CD4-positive, alpha-beta memory T cell (primary cell): ENCODE measurements at regions of chr5 and their contacts with region 1.

Region 1: DNA sequence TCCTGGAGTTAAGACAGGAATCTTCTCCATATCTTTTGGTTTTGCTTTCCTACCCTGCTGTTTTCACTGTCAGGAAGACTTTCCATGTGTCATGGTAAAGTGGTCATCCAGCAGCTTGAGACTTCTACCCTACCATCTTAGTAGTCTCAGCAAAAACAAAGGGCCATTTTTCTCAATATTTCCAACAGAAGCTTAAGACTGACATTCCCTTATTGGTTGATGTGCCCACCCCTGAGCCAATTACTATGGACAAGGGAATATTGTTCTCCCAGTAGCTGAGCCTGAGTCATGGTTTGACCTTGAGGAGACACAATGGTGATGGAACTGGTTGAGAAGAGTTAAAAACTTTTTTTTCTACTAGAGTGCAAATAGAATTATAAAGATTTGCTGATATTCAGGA is 105.6 kb downstream of the CSNK1G3 start:
- DNase-seq: no peak
- H3K4me3 ChIP-seq: no peak overlapping the region
- H3K4me3 Mint-ChIP-seq: no peak overlapping the region
- H3K27ac ChIP-seq: no peak overlapping the region
- H3K27ac Mint-ChIP-seq: no peak overlapping the region
- H3K4me1 ChIP-seq: no peaks in the 10 kb centered on the region
- H3K4me1 Mint-ChIP-seq: no peaks in the 10 kb centered on the region
- H3K27me3 ChIP-seq: no peaks in the 10 kb centered on the region
- H3K27me3 Mint-ChIP-seq: no peaks in the 10 kb centered on the region

Region 2: DNA sequence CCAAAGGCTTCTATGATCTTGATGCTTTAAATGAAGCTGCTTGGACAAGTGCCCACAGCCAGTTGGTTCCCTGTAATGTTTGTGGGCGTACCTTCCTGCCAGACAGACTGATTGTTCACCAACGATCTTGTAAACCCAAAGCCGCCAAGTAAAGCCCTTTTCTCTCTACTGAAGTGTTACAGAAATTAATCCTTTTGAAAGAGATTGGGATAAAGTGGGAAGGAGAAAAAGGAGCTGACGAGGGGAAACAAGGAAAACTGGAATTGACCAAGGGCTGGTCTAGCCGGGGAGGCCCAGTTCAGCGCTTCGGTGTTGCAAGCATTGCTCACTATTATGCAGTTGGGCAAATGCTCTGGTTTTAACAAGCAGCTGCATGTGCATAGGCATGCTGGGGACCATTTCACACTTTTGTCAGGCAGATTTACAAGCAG is 1435.1 kb before region 1 on chr5:
- CTCF ChIA-PET with region 1: no interaction called
- POLR2A ChIA-PET with region 1: no interaction called
- intact Hi-C with region 1: loop called (anchors 5 kb)
- DNase-seq: no peak
- H3K4me3 ChIP-seq: no peak overlapping the region
- H3K4me3 Mint-ChIP-seq: no peak overlapping the region
- H3K27ac ChIP-seq: no peak overlapping the region
- H3K27ac Mint-ChIP-seq: no peak overlapping the region
- H3K4me1 ChIP-seq: no peaks in the 10 kb centered on the region
- H3K4me1 Mint-ChIP-seq: no peaks in the 10 kb centered on the region
- H3K27me3 ChIP-seq: no peaks in the 10 kb centered on the region
- H3K27me3 Mint-ChIP-seq: peaks cover 3 to 6% of the 10 kb centered on the region in 2 donors